Uterus (tissue), 4 donors: ENCODE measurements at regions of chr1 and their contacts with region 1.

Region 1: DNA sequence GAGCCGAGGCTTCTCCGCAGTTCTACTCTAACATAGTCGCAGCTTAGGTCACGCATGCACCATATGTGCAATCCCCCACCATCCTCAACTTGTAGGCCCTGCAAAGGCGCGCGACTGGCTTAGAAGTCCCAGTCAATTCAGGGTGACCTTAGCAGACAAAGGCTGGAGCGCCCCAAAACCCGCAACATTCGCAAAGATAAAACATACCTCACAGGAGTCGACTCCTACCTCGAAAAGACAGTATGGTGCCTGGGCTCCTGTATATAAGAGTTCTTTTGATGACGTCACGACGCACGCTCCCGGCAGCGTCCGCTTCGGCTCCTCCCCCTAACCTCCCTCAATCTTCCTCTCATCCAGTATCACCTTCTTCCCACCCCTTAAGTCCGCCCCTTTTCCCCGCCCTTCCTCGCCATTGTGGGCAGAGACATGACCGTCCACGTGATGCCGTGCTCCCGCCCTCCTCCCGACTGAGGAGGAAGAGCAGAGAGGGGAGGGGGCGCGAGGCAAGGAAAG is at the start of gene GAS5:
- DNase-seq: peak; percentile 98 to 99
- H3K4me3 ChIP-seq: peak within 1 kb of the TSS; percentile 65 to 74
- H3K27ac ChIP-seq: peak within 1 kb of the TSS; percentile 87 to 92
- H3K4me1 ChIP-seq: no peaks in the 10 kb centered on the region
- H3K27me3 ChIP-seq: no peaks in the 10 kb centered on the region
- CTCF ChIP-seq: no peak
- POLR2A ChIP-seq: peak; percentile 86 to 98
- total RNA-seq, gene GAS5: 566 to 2,222 (median 828) TPM

Region 2: DNA sequence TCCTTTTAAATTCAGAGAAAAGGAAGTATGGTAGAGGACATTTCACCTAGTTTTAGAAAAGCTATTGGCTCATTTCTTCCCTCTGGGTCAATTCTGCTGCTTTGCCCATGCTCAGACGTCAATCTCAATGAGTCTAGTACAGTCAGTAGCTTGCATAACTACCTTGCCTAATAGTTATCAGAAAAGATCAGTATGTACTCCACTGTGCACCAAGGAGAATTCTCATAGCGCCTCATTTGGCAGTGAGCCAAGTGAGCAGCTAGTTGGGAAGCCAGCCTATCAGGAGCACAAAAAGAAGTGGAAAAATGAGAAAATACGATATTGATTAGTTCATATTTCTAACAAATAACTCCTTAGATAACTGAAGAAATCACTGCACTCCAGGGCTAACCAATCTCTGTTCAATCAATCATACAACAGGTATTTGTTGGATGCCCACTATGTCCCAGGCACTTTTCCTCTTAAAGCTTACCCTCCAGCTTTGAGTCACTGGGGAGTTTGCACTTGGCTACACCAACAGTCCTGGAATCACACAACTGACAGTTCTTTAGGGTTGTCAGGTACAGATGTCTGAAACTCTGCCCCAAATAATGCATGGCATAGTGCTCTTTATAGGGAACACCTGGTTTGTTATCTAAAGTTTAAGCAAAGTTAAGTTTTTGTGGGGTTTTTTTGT is 340.5 kb before region 1 on chr1:
- intact Hi-C with region 1: no loop called
- DNase-seq: no peak
- H3K4me3 ChIP-seq: no peak overlapping the region
- H3K27ac ChIP-seq: no peak overlapping the region
- H3K4me1 ChIP-seq: no peaks in the 10 kb centered on the region
- H3K27me3 ChIP-seq: no peaks in the 10 kb centered on the region
- CTCF ChIP-seq: no peak
- POLR2A ChIP-seq: no peak

Region 3: GRCh38 chr1:173954179-173954578 is 86.4 kb after region 1 on chr1:
- intact Hi-C with region 1: no loop called
- DNase-seq: no peak
- H3K4me3 ChIP-seq: no peak overlapping the region
- H3K27ac ChIP-seq: no peak overlapping the region
- H3K4me1 ChIP-seq: no peaks in the 10 kb centered on the region
- H3K27me3 ChIP-seq: no peaks in the 10 kb centered on the region
- CTCF ChIP-seq: no peak
- POLR2A ChIP-seq: no peak

Region 4: GRCh38 chr1:174022080-174022975 is 154.5 kb after region 1 on chr1 and contains the start of gene RC3H1:
- intact Hi-C with region 1: loop called (anchors 5 kb)
- DNase-seq: peak; percentile 86 to 87
- H3K4me3 ChIP-seq: peak within 1 kb of the TSS; percentile 88 to 99
- H3K27ac ChIP-seq: peak within 1 kb of the TSS; percentile 95 to 99
- H3K4me1 ChIP-seq: peaks cover 0 to 8% of the 10 kb centered on the region in 2 donors
- H3K27me3 ChIP-seq: no peaks in the 10 kb centered on the region
- CTCF ChIP-seq: no peak
- POLR2A ChIP-seq: peak; percentile 96 to 98
- total RNA-seq, gene RC3H1: 15.9 to 45.7 (median 32.7) TPM

Region 5: DNA sequence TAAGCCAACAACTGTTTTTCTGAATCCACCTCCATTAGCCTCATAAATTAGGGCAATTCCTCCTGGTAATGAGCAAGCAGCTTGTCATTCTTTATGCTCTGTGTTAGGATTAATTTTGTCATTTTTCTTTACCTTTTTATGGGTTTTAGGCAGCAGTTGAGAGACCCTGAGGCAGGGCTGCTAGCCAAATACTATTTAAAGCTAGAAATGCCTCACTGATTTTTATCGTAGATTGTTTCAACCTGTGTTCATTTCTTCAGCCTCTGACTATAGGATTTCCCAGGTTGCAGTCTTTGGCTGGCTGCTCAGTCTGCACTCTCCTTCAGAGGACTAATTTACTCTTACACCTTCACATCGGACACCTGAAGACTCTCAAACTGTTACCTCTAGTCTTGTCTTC is 229.6 kb after region 1 on chr1:
- intact Hi-C with region 1: no loop called
- DNase-seq: no peak
- H3K4me3 ChIP-seq: no peak overlapping the region
- H3K27ac ChIP-seq: no peak overlapping the region
- H3K4me1 ChIP-seq: no peaks in the 10 kb centered on the region
- H3K27me3 ChIP-seq: no peaks in the 10 kb centered on the region
- CTCF ChIP-seq: no peak
- POLR2A ChIP-seq: no peak